Activated CD4-positive, alpha-beta memory T cell treated with anti-CD3 and anti-CD28 coated beads, Interleukin-2, amount 10 ng/mL, durations not matched to agents 7 days and 5 days (primary cell): ENCODE measurements at regions of chr5 and their contacts with region 1.

Region 1: DNA sequence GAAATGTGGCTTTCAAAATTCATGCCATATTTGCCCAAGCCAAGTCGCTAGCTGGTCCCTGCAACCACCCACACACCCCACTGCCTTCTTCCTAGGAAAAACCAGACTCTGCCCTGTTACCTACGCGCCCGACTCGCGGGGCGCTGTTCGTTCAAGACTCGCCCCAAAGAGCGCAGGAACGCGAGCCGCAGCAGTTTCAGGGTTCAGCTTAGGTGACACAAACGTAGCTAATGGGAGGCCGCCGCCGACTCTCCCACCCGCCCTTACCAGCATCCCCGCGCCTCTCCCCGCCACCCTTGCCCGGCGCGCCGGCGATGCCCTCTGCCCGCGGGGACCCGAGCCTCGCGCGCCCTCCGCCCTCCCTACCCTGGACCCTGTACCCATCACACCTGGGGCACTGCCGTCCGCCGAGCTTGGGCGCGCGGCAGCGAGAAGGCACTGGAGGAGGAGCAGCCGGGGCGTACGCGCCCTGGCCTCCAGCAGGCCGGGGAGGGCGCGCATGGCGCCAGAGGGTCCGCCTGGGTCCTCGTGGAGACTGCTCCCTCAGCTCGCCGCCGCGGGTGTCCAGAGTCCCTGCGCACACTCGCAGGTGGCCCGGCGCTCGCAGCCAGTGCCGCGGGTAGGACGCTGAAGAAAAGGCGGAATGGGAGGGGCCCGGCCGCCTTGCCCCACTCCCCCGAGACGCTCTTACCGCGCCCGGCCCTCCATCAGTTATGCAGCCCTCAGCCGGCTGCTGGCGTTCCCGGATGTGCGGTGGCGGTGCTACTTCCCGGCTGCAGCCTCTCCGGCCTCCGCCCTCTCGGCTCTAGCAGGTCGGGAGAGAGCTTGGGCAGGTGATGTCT is at the start of gene EMB:
- DNase-seq: peak; percentile 85
- H3K4me3 Mint-ChIP-seq: peak within 1 kb of the TSS; percentile 97
- H3K27ac Mint-ChIP-seq: peak within 1 kb of the TSS; percentile 94
- H3K4me1 Mint-ChIP-seq: peaks cover 70% of the 10 kb centered on the region
- H3K27me3 Mint-ChIP-seq: no peaks in the 10 kb centered on the region
- total RNA-seq, gene EMB: 181 to 188 TPM

Region 2: GRCh38 chr5:50320131-50320749 is 120.6 kb before region 1 on chr5:
- CTCF ChIA-PET with region 1: no interaction called
- POLR2A ChIA-PET with region 1: no interaction called
- DNase-seq: no peak
- H3K4me3 Mint-ChIP-seq: no peak overlapping the region
- H3K27ac Mint-ChIP-seq: no peak overlapping the region
- H3K4me1 Mint-ChIP-seq: no peaks in the 10 kb centered on the region
- H3K27me3 Mint-ChIP-seq: no peaks in the 10 kb centered on the region

Region 3: GRCh38 chr5:50595199-50595598 is 154.3 kb after region 1 on chr5:
- CTCF ChIA-PET with region 1: interaction called, 3 read pairs
- POLR2A ChIA-PET with region 1: interaction called, 12 read pairs
- DNase-seq: no peak
- H3K4me3 Mint-ChIP-seq: no peak overlapping the region
- H3K27ac Mint-ChIP-seq: peak overlapping the region; percentile 75
- H3K4me1 Mint-ChIP-seq: peaks cover 58% of the 10 kb centered on the region
- H3K27me3 Mint-ChIP-seq: no peaks in the 10 kb centered on the region

Region 4: GRCh38 chr5:50744776-50745175 is 303.9 kb after region 1 on chr5:
- CTCF ChIA-PET with region 1: interaction called, 4 read pairs
- POLR2A ChIA-PET with region 1: interaction called, 15 read pairs
- DNase-seq: no peak
- H3K4me3 Mint-ChIP-seq: peak overlapping the region; percentile 86
- H3K27ac Mint-ChIP-seq: peak overlapping the region; percentile 79
- H3K4me1 Mint-ChIP-seq: peaks cover 59% of the 10 kb centered on the region
- H3K27me3 Mint-ChIP-seq: no peaks in the 10 kb centered on the region

Region 5: GRCh38 chr5:50751064-50751657 is 310.3 kb after region 1 on chr5:
- CTCF ChIA-PET with region 1: interaction called, 12 read pairs
- POLR2A ChIA-PET with region 1: interaction called, 4 read pairs
- DNase-seq: peak; percentile 50
- H3K4me3 Mint-ChIP-seq: no peak overlapping the region
- H3K27ac Mint-ChIP-seq: no peak overlapping the region
- H3K4me1 Mint-ChIP-seq: peaks cover 39% of the 10 kb centered on the region
- H3K27me3 Mint-ChIP-seq: no peaks in the 10 kb centered on the region